Naive thymus-derived CD4-positive, alpha-beta T cell (primary cell): ENCODE measurements at regions of chr2 and their contacts with region 1.

Region 1: DNA sequence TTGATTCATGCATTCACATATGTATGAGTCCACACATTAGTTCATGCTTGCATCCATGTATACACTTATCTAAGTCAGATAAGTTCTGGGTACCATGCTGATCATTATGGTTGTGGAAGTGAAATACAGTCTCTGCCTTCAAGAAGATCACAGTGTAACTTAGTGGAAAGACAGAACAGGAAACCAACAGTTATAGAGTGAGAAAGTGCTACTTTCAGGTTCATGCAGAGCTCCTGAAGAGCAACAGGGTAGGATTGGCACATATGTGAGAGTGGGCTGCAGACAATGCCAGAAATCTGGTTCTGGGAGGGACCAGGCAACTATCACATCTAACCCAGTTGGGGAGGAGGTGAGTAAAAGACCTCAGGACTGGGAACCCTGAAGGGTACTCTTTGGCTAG is 35.4 kb upstream of the PGAP1 start:
- DNase-seq: no peak
- ATAC-seq: peak; percentile 54
- H3K4me3 ChIP-seq: no peak overlapping the region
- H3K4me3 Mint-ChIP-seq: peak overlapping the region in 1 of 10 donors; percentile 31
- H3K27ac ChIP-seq: no peak overlapping the region
- H3K27ac Mint-ChIP-seq: peak overlapping the region in 2 of 9 donors; percentile 16 to 47
- H3K4me1 ChIP-seq: no peaks in the 10 kb centered on the region
- H3K4me1 Mint-ChIP-seq: peaks cover 0 to 27% (median 0%) of the 10 kb centered on the region in 7 donors
- H3K27me3 ChIP-seq: no peaks in the 10 kb centered on the region
- H3K27me3 Mint-ChIP-seq: no peaks in the 10 kb centered on the region

Region 2: DNA sequence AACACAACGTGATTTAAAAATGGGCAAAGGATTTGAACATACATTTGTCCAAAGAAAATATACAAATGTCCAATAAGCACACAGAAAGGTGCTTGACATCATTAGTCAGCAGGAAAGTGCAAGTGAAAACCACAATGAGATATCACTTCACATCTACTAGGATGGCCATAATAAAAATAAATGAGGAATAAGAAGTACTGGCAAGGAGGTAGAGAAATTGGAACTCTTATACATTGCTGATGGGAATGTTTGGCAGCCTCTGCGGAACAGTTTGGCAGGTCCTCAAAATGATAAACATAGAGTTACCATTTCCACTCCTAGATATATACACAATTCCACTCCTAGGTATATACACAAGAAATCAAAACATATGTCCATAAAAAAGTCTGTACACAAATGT is 15.6 kb after region 1 on chr2:
- CTCF ChIA-PET with region 1: no interaction called
- POLR2A ChIA-PET with region 1: no interaction called
- intact Hi-C with region 1: loop called in 1 of 2 experiments (anchors 2 kb)
- DNase-seq: no peak
- ATAC-seq: no peak
- H3K4me3 ChIP-seq: no peak overlapping the region
- H3K4me3 Mint-ChIP-seq: no peak overlapping the region
- H3K27ac ChIP-seq: no peak overlapping the region
- H3K27ac Mint-ChIP-seq: no peak overlapping the region
- H3K4me1 ChIP-seq: no peaks in the 10 kb centered on the region
- H3K4me1 Mint-ChIP-seq: peaks cover 0 to 5% (median 3%) of the 10 kb centered on the region in 7 donors
- H3K27me3 ChIP-seq: no peaks in the 10 kb centered on the region
- H3K27me3 Mint-ChIP-seq: no peaks in the 10 kb centered on the region